ENCODE measurements at regions of chr18 and their contacts with region 1.

Region 1: GRCh38 chr18:45997700-45998151 is 30.6 kb upstream of the EPG5 start:
- DNase-seq: peak; percentile 27
- H3K4me3 Mint-ChIP-seq: peak overlapping the region; percentile 28
- H3K27ac Mint-ChIP-seq: peak overlapping the region; percentile 85
- H3K4me1 Mint-ChIP-seq: peaks cover 41% of the 10 kb centered on the region
- H3K27me3 Mint-ChIP-seq: no peaks in the 10 kb centered on the region

Region 2: GRCh38 chr18:45825258-45826044 is 172.3 kb before region 1 on chr18 and contains the start of gene SIGLEC15:
- intact Hi-C with region 1: no loop called
- DNase-seq: no peak
- H3K4me3 Mint-ChIP-seq: no peak within 1 kb of the TSS
- H3K27ac Mint-ChIP-seq: no peak within 1 kb of the TSS
- H3K4me1 Mint-ChIP-seq: peaks cover 10% of the 10 kb centered on the region
- H3K27me3 Mint-ChIP-seq: peaks cover 36% of the 10 kb centered on the region
- total RNA-seq, gene SIGLEC15: not detected in 2 replicates

Region 3: GRCh38 chr18:45856531-45856930 is 141.2 kb before region 1 on chr18:
- intact Hi-C with region 1: no loop called
- DNase-seq: no peak
- H3K4me3 Mint-ChIP-seq: no peak overlapping the region
- H3K27ac Mint-ChIP-seq: no peak overlapping the region
- H3K4me1 Mint-ChIP-seq: no peaks in the 10 kb centered on the region
- H3K27me3 Mint-ChIP-seq: no peaks in the 10 kb centered on the region

Region 4: GRCh38 chr18:46013484-46014189 is 15.9 kb after region 1 on chr18:
- intact Hi-C with region 1: loop called (anchors 1 kb)
- DNase-seq: no peak
- H3K4me3 Mint-ChIP-seq: no peak overlapping the region
- H3K27ac Mint-ChIP-seq: peak overlapping the region; percentile 53
- H3K4me1 Mint-ChIP-seq: peaks cover 18% of the 10 kb centered on the region
- H3K27me3 Mint-ChIP-seq: no peaks in the 10 kb centered on the region

Region 5: GRCh38 chr18:46042571-46043123 is 44.9 kb after region 1 on chr18:
- intact Hi-C with region 1: loop called (anchors 5 kb)
- DNase-seq: peak; percentile 17
- H3K4me3 Mint-ChIP-seq: no peak overlapping the region
- H3K27ac Mint-ChIP-seq: peak overlapping the region; percentile 5
- H3K4me1 Mint-ChIP-seq: peaks cover 40% of the 10 kb centered on the region
- H3K27me3 Mint-ChIP-seq: no peaks in the 10 kb centered on the region

Measured in activated T-helper 2 cell treated with anti-CD3 and anti-CD28 coated beads, Interferon-gamma antibody, Interleukin-2, Interleukin-4, amounts not matched to agents 10 μg/mL and 5 μg/mL and 100 μg/mL, durations not matched to agents 14 hours and 24 hours and 36 hours (primary cell).